Colonic mucosa (tissue), 4 donors: ENCODE measurements at regions of chr10 and their contacts with region 1.

Region 1: DNA sequence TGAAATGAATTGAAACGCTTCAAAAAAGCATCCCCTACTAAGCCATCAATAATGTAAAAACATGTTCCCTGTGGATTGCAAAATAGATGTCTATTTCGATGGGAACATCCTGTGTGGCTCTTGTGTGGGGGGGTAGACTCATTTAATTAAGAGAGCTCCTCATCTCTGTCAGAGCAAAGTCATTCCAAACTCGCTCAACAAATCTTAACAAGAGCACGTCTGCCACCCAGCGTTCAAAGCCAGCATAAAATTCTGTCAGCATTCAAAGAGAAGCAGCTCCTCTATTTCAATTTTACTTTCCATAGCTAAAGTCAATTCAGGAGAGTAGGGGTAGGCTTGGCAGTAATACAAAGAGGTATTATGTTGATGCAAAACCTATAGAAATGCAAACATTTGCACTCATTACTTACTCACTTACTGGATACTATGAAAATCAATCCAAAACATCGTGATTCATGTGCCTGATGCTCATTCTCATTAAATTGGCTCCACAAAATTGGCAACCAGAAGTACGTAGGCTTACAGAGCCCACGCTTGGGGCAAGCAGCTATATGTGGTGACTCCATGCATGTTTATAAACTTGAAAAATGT is 114.9 kb downstream of the IPMK start:
- DNase-seq: peak; percentile 59
- H3K4me3 ChIP-seq: no peak overlapping the region
- H3K27ac ChIP-seq: no peak overlapping the region
- H3K4me1 ChIP-seq: no peaks in the 10 kb centered on the region
- H3K27me3 ChIP-seq: no peaks in the 10 kb centered on the region
- CTCF ChIP-seq: peak; percentile 49

Region 2: DNA sequence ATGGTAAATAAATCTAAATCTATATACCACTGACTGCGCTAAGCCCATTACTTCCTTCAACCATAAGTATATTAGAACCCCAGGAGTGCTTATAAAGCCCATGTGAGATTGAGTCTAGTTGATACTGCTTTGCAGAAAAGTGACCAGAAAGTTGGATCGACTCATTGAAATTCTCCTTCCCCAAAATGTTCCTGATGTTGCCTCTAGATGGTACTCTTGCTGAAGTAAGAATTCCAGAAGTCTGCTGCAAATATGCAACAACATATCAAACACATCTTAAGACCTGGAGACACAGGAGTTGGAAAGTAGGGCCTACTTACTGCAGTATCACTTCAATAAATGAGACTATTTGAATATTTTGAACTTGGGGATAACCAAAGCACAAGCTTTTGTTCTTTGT is 435.9 kb before region 1 on chr10:
- intact Hi-C with region 1: loop called (anchors 10 kb)
- DNase-seq: no peak
- H3K4me3 ChIP-seq: no peak overlapping the region
- H3K27ac ChIP-seq: no peak overlapping the region
- H3K4me1 ChIP-seq: no peaks in the 10 kb centered on the region
- H3K27me3 ChIP-seq: no peaks in the 10 kb centered on the region
- CTCF ChIP-seq: no peak

Region 3: GRCh38 chr10:58115218-58116052 is 37.3 kb before region 1 on chr10:
- intact Hi-C with region 1: no loop called
- DNase-seq: no peak
- H3K4me3 ChIP-seq: no peak overlapping the region
- H3K27ac ChIP-seq: no peak overlapping the region
- H3K4me1 ChIP-seq: no peaks in the 10 kb centered on the region
- H3K27me3 ChIP-seq: no peaks in the 10 kb centered on the region
- CTCF ChIP-seq: no peak